Ascending aorta (tissue), 2 donors: ENCODE measurements at regions of chr14 and their contacts with region 1.

Region 1: GRCh38 chr14:75654127-75654732 is 6.4 kb downstream of the ERG28 start:
- DNase-seq: peak; percentile 22 to 88
- H3K4me3 ChIP-seq: no peak overlapping the region
- H3K27ac ChIP-seq: no peak overlapping the region
- H3K4me1 ChIP-seq: no peaks in the 10 kb centered on the region
- H3K27me3 ChIP-seq: no peaks in the 10 kb centered on the region
- CTCF ChIP-seq: peak; percentile 79 to 95 (median 93)

Region 2: DNA sequence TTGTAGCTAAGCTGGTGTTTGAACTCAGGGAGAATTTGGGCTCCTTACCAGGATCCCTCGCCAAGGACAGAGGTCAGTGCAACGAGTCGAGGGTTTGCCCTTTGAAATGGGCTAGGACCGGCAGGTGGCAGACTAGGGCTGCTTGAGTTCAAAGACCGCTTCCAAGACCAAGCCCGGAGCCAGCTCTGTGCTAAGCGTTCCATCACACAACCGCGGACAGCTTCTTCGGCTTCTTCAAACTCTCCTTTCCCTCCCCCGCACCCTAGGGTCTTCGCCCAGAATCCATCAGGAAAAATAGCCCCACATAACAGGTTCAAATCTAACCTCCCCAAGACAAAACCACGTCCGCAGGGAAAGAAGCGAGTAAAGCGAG is 76.5 kb before region 1 on chr14:
- intact Hi-C with region 1: loop called (anchors 1 kb)
- DNase-seq: peak; percentile 47 to 92
- H3K4me3 ChIP-seq: peak overlapping the region; percentile 65 to 74
- H3K27ac ChIP-seq: peak overlapping the region; percentile 73 to 76
- H3K4me1 ChIP-seq: peaks cover 6 to 11% of the 10 kb centered on the region in 2 donors
- H3K27me3 ChIP-seq: no peaks in the 10 kb centered on the region
- CTCF ChIP-seq: peak; percentile 69 to 81 (median 77)

Region 3: GRCh38 chr14:75875958-75876357 is 221.7 kb after region 1 on chr14:
- intact Hi-C with region 1: no loop called
- DNase-seq: no peak
- H3K4me3 ChIP-seq: no peak overlapping the region
- H3K27ac ChIP-seq: no peak overlapping the region
- H3K4me1 ChIP-seq: peaks cover 0 to 4% of the 10 kb centered on the region in 2 donors
- H3K27me3 ChIP-seq: no peaks in the 10 kb centered on the region
- CTCF ChIP-seq: no peak